CD8-positive, alpha-beta T cell (primary cell): ENCODE measurements at regions of chr17 and their contacts with region 1.

Region 1: GRCh38 chr17:15485045-15485444 is 17.6 kb upstream of the CDRT4 start:
- DNase-seq: no peak
- ATAC-seq: no peak
- H3K4me3 ChIP-seq: no peak overlapping the region
- H3K4me3 Mint-ChIP-seq: no peak overlapping the region
- H3K27ac ChIP-seq: no peak overlapping the region
- H3K27ac Mint-ChIP-seq: no peak overlapping the region
- H3K4me1 ChIP-seq: no peaks in the 10 kb centered on the region
- H3K4me1 Mint-ChIP-seq: no peaks in the 10 kb centered on the region
- H3K27me3 ChIP-seq: no peaks in the 10 kb centered on the region
- H3K27me3 Mint-ChIP-seq: no peaks in the 10 kb centered on the region
- CTCF ChIP-seq: no peak

Region 2: GRCh38 chr17:14813649-14814365 is 671.2 kb before region 1 on chr17:
- CTCF ChIA-PET with region 1: no interaction called
- POLR2A ChIA-PET with region 1: no interaction called
- intact Hi-C with region 1: no loop called
- DNase-seq: peak in 3 of 9 experiments; percentile 16 to 42 (median 35)
- ATAC-seq: no peak
- H3K4me3 ChIP-seq: no peak overlapping the region
- H3K4me3 Mint-ChIP-seq: no peak overlapping the region
- H3K27ac ChIP-seq: no peak overlapping the region
- H3K27ac Mint-ChIP-seq: no peak overlapping the region
- H3K4me1 ChIP-seq: no peaks in the 10 kb centered on the region
- H3K4me1 Mint-ChIP-seq: no peaks in the 10 kb centered on the region
- H3K27me3 ChIP-seq: no peaks in the 10 kb centered on the region
- H3K27me3 Mint-ChIP-seq: peaks cover 5% of the 10 kb centered on the region
- CTCF ChIP-seq: no peak

Region 3: GRCh38 chr17:15236281-15237105 is 248.6 kb before region 1 on chr17:
- CTCF ChIA-PET with region 1: no interaction called
- POLR2A ChIA-PET with region 1: no interaction called
- intact Hi-C with region 1: loop called in 1 of 2 experiments (anchors 5 kb)
- DNase-seq: no peak
- ATAC-seq: no peak
- H3K4me3 ChIP-seq: no peak overlapping the region
- H3K4me3 Mint-ChIP-seq: no peak overlapping the region
- H3K27ac ChIP-seq: no peak overlapping the region
- H3K27ac Mint-ChIP-seq: no peak overlapping the region
- H3K4me1 ChIP-seq: peaks cover 6% of the 10 kb centered on the region
- H3K4me1 Mint-ChIP-seq: peaks cover 7% of the 10 kb centered on the region
- H3K27me3 ChIP-seq: no peaks in the 10 kb centered on the region
- H3K27me3 Mint-ChIP-seq: peaks cover 12% of the 10 kb centered on the region
- CTCF ChIP-seq: no peak